Sciatic nerve (tissue), 2 donors: ENCODE measurements at regions of chr1 and their contacts with region 1.

Region 1: DNA sequence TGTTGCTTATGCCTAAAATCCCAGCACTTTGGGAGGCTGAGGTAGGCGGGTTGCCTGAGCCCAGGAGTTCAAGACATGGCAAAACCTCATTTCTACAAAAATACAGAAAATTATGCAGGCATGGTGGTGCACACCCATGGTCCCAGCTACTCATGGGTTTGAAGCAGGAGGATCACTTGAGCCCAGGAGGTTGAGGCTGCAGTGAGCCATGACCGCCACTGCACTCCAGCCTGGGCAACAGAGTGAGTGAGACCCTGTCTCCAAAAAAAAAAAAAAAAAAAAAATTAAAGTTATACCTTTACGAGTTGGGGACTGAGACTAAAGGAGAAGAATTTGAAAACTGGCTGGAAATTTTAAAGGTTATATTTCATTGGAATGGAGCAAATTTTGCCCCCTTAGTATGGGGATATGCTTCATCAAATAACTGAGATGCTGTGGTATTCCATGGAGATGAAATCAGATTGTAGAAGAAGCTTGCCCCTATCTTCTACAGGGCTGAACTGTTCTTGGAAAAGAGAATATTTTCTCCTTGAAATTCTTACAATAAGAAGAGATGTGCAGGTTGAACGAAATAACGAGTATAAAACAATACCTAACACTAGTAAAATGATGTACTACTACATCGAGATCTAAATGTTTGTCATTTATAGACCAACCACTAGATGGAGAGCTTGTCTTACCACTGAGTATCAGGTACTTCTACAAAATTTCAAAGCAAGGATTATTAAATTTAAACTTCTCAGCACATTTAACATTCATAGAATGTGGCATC is 34.9 kb upstream of the SCYL3 start:
- DNase-seq: no peak
- ATAC-seq: peak; percentile 65

Region 2: DNA sequence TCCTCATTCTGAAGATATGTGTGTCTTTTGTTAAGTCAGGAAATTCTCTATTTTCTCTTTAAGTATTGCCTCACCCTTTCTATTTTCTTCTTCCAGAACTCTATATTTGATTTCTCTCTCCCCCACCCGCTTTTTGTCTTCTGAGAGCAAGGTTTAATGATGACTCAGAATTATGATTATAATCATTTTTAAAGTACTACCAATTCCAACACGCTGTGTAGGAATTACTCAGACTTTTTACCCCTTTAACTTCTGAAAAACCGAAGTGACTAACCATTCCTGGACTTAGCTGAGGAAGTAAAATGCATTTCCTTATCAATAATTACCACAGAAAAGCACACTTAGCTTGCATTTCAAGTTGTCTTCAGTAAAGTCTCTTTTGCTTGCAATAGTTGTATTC is 14.1 kb before region 1 on chr1:
- intact Hi-C with region 1: no loop called
- DNase-seq: no peak
- ATAC-seq: no peak

Region 3: DNA sequence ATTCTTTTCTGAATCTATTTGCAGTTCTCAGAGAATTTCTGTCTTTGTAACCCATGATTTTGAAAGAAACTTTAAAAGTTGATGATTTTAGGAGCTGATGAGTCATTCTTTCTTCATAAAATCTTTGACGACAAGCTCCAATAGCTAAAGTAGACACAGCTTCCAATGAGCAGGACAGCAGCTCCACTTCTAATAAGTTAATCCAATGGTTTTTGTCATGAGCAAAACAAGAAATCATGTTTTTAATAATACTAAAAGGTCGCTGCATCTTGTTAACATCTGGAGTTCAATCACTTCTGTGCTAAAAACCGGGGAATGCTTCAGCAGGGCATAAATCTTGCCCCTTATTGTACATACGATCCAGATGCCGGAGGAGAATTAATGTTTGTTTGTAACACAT is 554.4 kb after region 1 on chr1:
- intact Hi-C with region 1: loop called (anchors 5 kb)
- DNase-seq: no peak
- ATAC-seq: no peak